Activated CD8-positive, alpha-beta T cell treated with anti-CD3 and anti-CD28 coated beads for 36 hours (primary cell): ENCODE measurements at regions of chr2 and their contacts with region 1.

Region 1: DNA sequence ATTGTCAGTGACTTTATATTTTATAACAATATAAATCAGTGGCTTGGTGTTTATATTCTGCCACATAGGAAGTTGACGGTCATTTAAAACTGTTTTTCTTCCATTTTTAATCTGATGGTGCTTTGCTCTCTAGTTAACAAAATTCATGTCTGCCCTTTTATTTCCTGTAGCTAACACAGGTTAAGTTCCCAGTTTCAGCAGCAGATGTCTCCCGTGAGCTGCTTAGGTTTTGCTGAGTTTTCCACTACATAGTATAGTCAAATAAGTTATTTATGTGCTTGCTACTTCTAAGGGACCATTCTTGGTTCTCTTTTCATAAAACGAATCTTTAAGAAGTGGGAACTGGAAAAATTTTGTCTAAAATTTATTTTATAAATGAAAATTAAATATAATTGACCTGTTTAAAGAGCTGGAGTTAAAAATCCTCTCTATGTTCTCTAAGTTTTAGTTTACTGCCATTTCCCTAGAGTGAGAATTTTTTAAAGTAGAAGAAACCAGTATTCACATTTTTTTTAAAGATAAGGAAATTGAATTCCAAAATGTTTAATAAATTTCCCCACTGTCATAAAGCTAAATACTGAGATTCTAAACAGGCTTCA is 20.6 kb downstream of the HTR2B start:
- DNase-seq: peak; percentile 76
- ATAC-seq: peak; percentile 92
- H3K4me3 Mint-ChIP-seq: no peak overlapping the region
- H3K27ac Mint-ChIP-seq: no peak overlapping the region
- H3K4me1 Mint-ChIP-seq: peaks cover 11% of the 10 kb centered on the region
- H3K27me3 Mint-ChIP-seq: no peaks in the 10 kb centered on the region
- CTCF ChIP-seq: peak; percentile 80

Region 2: DNA sequence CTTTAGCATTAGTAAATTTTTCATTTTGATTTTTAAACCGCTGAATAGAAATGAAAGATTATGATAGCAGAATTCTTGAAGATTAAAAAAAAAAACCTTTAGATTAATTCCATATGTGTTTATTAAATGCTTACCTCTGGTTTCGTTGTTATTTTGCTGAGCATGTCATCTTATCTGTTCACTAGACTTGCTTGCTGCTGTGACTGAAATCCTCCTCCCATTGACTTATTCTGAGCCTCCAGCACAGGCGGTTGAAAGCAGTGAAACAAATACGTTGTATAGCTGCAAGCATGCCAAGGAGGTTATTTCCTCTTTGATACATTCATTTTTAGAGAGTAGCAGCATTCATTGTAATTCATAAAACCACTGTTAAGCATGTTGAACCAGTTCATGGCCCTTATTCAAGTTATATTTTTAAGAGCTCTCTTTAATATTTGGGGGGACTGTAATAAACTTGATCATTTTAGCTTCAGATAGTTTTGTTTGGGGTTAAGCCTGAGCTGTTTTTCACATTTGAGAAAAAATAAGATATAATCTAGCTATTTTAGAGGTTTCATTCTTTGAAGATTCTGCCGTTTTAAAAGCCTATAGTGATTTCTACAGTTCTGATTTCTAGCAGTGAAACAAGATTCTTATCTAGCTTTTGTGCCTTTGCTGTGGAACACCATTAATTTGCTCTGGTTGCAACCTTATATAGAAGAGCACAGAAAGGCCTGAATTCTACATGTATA is 20.8 kb after region 1 on chr2 and contains the start of gene HTR2B:
- CTCF ChIA-PET with region 1: interaction called, 19 read pairs
- POLR2A ChIA-PET with region 1: no interaction called
- intact Hi-C with region 1: no loop called
- DNase-seq: peak; percentile 6
- ATAC-seq: peak; percentile 76
- H3K4me3 Mint-ChIP-seq: no peak within 1 kb of the TSS
- H3K27ac Mint-ChIP-seq: no peak within 1 kb of the TSS
- H3K4me1 Mint-ChIP-seq: peaks cover 20% of the 10 kb centered on the region
- H3K27me3 Mint-ChIP-seq: no peaks in the 10 kb centered on the region
- CTCF ChIP-seq: no peak
- total RNA-seq, gene HTR2B: not detected

Region 3: DNA sequence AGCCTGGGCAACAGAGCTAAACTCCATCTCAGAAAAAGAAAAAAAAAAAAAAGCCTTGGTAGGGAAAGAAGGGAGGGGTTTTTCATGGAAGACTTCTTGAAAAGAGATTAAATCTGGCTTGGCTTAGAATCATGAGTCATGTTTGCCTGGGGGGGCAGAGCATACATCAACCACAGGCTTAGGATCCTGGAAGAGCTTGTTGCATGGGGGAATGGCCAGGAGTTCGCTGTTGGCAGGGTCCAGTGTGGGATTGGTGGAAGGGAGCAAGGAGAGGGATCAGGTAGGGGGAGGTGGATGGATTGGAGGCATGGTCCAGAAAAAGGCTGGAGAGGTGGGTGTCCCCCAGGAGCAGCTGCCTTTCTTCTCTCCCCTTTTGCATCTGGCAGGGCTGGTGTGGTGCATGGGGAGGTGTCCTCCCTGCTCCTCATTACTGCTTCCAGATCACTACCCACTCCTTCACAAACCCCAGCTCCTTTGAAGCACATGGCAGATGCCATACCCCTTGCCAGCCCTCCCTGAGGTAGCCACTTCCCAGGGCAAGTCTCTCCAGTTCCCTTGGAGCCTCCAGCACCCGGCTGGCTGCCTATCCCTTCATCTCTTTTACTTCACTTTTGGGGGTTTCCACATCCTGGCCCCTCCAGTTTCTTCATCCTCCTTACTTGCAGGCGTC is 96.7 kb after region 1 on chr2:
- CTCF ChIA-PET with region 1: no interaction called
- POLR2A ChIA-PET with region 1: no interaction called
- intact Hi-C with region 1: no loop called
- DNase-seq: no peak
- ATAC-seq: no peak
- H3K4me3 Mint-ChIP-seq: no peak overlapping the region
- H3K27ac Mint-ChIP-seq: no peak overlapping the region
- H3K4me1 Mint-ChIP-seq: peaks cover 13% of the 10 kb centered on the region
- H3K27me3 Mint-ChIP-seq: no peaks in the 10 kb centered on the region
- CTCF ChIP-seq: no peak

Region 4: GRCh38 chr2:231297108-231297908 is 193.1 kb after region 1 on chr2:
- CTCF ChIA-PET with region 1: no interaction called
- POLR2A ChIA-PET with region 1: no interaction called
- intact Hi-C with region 1: no loop called
- DNase-seq: peak; percentile 47
- ATAC-seq: peak; percentile 72
- H3K4me3 Mint-ChIP-seq: no peak overlapping the region
- H3K27ac Mint-ChIP-seq: no peak overlapping the region
- H3K4me1 Mint-ChIP-seq: no peaks in the 10 kb centered on the region
- H3K27me3 Mint-ChIP-seq: no peaks in the 10 kb centered on the region
- CTCF ChIP-seq: peak; percentile 71